Activated T-helper 1 cell treated with anti-CD3 and anti-CD28 coated beads, Interleukin-12 subunit alpha, Interleukin-12 subunit beta, Interleukin-2, Interleukin-4 antibody, amounts not matched to agents 30 ng/mL and 10 ng/mL and 1 ng/mL, durations not matched to agents 14 hours and 24 hours and 36 hours (primary cell): ENCODE measurements at regions of chr12 and their contacts with region 1.

Region 1: DNA sequence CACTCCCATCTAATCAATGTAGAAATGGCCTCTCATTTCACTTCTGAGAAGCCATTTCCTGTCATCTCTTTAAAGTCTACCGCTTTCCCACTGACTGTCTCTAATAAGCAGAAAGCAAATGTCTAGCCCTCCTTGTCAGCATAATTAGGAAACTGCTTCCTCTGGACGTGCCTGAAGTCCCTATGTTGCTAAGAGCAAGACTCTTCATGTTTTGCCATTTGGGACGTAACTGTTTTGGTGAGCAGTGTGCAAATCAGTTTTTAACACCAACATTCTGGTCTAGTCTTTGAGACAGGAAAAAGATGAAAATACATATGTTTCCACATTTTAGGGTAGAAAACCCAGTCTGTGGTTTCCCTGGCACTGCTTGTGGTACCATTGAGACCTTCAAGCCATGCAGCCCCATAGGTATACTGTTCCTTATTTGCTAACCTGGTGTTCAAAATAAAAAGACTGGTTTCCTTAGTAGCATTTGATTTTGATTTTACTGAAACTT is 22.2 kb downstream of the IFNG start:
- DNase-seq: no peak
- H3K4me3 Mint-ChIP-seq: peak overlapping the region; percentile 61
- H3K27ac Mint-ChIP-seq: peak overlapping the region; percentile 91
- H3K4me1 Mint-ChIP-seq: peaks cover 75% of the 10 kb centered on the region
- H3K27me3 Mint-ChIP-seq: no peaks in the 10 kb centered on the region

Region 2: DNA sequence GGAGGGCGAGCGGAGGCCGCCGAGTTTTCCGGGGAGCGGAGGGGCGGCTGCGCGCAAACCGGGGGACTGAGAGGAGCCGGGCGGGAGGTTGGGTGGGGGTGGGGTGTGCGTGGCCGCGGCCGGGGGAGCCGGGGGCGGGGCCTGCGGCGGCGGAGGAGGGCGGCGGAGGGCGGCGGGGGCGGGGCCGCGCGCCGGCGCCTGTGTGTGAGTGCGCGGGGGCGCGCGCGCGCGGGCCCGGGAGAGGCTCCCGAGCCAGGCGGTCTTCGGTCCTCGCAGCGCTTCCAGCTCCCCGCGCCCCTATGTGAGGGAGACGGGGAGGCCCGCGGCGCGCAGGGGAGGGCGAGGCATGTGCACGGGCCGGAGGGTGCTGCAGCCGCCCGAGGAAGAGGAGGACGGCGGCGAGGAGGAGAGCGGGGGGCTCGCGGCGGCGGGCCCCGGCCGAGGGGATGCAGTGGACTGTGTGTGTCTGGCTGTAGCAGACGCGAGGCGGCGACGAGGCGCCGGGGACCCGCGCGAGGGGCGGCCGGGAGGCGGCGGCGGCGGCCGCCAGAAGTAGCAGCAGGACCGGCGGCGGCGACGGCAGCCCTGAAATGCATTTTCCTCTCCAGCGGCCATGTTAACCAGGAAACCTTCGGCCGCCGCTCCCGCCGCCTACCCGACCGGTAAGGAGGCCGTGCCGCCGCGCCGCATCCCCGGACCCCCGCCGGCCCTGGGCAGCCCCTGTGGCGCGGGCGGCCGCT is 488.7 kb before region 1 on chr12 and contains the start of gene DYRK2:
- intact Hi-C with region 1: no loop called
- DNase-seq: peak; percentile 67
- H3K4me3 Mint-ChIP-seq: peak within 1 kb of the TSS; percentile 94
- H3K27ac Mint-ChIP-seq: peak within 1 kb of the TSS; percentile 89
- H3K4me1 Mint-ChIP-seq: peaks cover 42% of the 10 kb centered on the region
- H3K27me3 Mint-ChIP-seq: peaks cover 3% of the 10 kb centered on the region
- total RNA-seq, gene DYRK2: 43.0 and 46.7 TPM in 2 replicates

Region 3: DNA sequence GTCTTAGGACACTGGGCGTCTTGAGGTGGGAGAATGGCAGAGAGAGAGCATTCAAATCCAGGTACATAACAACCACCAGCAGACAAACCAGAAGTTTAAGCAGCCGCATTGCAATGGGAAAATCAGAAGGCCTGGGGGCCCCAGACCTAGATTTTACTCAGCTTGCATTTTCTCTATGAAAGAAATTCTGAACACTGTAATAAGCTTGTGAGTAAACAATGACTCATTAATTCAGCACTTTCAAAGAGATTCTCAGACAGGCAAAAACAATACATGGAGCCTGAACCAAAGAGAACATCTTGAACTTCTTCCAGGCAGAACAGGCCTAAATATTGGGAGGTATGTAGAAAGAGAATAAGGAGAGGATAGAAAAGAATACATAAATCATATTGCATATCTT is 218.0 kb before region 1 on chr12:
- intact Hi-C with region 1: no loop called
- DNase-seq: no peak
- H3K4me3 Mint-ChIP-seq: no peak overlapping the region
- H3K27ac Mint-ChIP-seq: no peak overlapping the region
- H3K4me1 Mint-ChIP-seq: no peaks in the 10 kb centered on the region
- H3K27me3 Mint-ChIP-seq: peaks cover 6% of the 10 kb centered on the region

Region 4: DNA sequence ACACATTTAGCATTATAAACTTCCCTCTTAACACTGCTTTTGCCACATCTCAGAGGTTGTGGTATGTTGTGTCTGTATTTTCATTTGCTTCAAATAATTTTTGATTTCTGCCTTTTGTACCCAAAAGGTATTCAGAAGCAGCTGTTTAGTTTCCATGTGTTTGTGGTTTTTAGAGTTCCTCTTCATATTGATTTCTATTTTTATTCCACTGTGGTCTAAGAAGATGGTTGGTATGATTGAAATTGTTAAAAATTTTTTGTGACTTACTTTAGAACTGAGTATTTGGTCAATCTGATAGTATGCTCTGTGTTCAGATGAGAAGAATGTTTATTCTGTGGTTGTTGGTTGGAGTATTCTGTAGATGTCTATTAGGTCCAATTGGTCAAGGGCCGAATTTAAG is 71.7 kb before region 1 on chr12:
- intact Hi-C with region 1: no loop called
- DNase-seq: no peak
- H3K4me3 Mint-ChIP-seq: no peak overlapping the region
- H3K27ac Mint-ChIP-seq: peak overlapping the region; percentile 36
- H3K4me1 Mint-ChIP-seq: peaks cover 32% of the 10 kb centered on the region
- H3K27me3 Mint-ChIP-seq: no peaks in the 10 kb centered on the region

Region 5: GRCh38 chr12:68106160-68106559 is 31.2 kb before region 1 on chr12:
- intact Hi-C with region 1: loop called (anchors 1 kb)
- DNase-seq: no peak
- H3K4me3 Mint-ChIP-seq: no peak overlapping the region
- H3K27ac Mint-ChIP-seq: no peak overlapping the region
- H3K4me1 Mint-ChIP-seq: peaks cover 16% of the 10 kb centered on the region
- H3K27me3 Mint-ChIP-seq: no peaks in the 10 kb centered on the region

Region 6: DNA sequence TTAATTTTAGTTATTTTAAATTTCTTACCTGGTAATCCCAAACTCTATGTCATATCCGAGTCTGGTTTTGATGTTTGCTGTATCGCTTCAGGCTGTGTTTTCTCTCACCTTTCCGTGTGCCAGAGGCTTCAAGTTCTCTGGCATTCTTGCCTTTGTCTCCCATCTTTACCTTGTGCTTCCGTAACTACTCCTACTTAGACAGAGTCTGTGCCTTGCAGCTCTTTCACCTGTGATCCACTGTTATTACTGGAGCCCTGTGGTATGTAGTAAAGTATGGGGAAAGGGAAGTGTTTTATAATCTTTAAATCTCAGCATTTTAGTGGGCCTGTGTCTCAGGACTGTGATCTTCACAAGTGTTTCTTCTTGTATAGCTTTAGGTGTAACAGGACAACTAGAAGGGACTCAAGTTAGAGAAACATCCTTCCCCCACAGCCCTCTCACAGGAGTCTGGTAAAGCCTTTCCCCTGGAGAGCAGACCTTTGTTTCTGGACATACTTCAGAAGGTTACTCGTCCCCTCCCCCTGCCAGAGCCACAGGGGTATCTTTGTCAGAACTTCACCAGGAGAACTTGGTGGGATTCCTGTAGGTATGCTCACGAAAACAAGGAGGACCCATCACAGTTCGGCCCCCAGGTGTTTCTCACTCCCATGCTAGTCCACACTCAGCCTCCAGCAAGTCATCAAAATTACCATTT is 11.0 kb after region 1 on chr12:
- intact Hi-C with region 1: loop called (anchors 1 kb)
- DNase-seq: no peak
- H3K4me3 Mint-ChIP-seq: no peak overlapping the region
- H3K27ac Mint-ChIP-seq: no peak overlapping the region
- H3K4me1 Mint-ChIP-seq: peaks cover 50% of the 10 kb centered on the region
- H3K27me3 Mint-ChIP-seq: no peaks in the 10 kb centered on the region

Region 7: DNA sequence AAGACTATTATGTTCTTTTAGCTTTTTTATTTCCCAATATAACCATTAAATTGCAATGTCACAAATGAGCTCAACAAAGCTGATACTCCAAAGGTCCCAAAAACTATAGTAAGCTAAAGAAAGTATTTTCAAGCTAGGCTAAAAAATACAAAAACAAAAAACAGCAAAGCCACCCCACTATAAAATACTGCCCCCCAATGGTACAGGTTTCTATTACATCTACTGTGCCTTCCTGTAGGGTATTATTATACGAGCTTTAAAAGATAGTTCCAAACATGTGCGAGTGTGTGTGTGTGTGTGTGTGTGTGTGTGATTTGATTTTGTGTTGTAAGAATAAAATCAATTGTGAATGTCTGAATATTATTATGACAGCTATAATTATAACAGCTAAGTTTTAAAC is 21.0 kb after region 1 on chr12:
- intact Hi-C with region 1: loop called (anchors 1 kb)
- DNase-seq: no peak
- H3K4me3 Mint-ChIP-seq: peak overlapping the region; percentile 91
- H3K27ac Mint-ChIP-seq: peak overlapping the region; percentile 87
- H3K4me1 Mint-ChIP-seq: peaks cover 65% of the 10 kb centered on the region
- H3K27me3 Mint-ChIP-seq: no peaks in the 10 kb centered on the region

Region 8: GRCh38 chr12:68175557-68176061 is 38.2 kb after region 1 on chr12:
- intact Hi-C with region 1: loop called (anchors 1 kb)
- DNase-seq: peak; percentile 81
- H3K4me3 Mint-ChIP-seq: peak overlapping the region; percentile 32
- H3K27ac Mint-ChIP-seq: peak overlapping the region; percentile 85
- H3K4me1 Mint-ChIP-seq: peaks cover 81% of the 10 kb centered on the region
- H3K27me3 Mint-ChIP-seq: no peaks in the 10 kb centered on the region

Region 9: DNA sequence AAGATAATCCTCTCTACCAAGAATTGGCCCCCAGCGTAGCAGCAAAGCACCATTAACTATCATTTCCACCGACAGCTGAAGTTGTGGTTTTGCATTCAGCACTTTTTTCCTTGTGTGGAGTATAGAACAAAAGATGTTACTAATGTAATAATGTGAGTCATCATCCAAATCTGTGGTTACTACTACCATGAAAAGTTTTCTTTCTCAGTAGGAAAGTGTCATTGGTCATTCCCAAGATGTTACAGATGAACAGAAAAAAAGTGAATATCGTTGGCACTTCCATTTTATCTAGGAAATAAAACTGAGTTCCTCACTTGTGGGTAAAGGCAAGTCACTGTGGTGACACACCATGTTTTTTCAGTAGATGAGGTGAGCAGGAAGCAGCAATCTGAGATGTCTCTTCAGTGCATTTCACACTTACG is 52.4 kb after region 1 on chr12:
- intact Hi-C with region 1: loop called (anchors 2 kb)
- DNase-seq: peak; percentile 41
- H3K4me3 Mint-ChIP-seq: peak overlapping the region; percentile 52
- H3K27ac Mint-ChIP-seq: peak overlapping the region; percentile 94
- H3K4me1 Mint-ChIP-seq: peaks cover 75% of the 10 kb centered on the region
- H3K27me3 Mint-ChIP-seq: no peaks in the 10 kb centered on the region

Region 10: DNA sequence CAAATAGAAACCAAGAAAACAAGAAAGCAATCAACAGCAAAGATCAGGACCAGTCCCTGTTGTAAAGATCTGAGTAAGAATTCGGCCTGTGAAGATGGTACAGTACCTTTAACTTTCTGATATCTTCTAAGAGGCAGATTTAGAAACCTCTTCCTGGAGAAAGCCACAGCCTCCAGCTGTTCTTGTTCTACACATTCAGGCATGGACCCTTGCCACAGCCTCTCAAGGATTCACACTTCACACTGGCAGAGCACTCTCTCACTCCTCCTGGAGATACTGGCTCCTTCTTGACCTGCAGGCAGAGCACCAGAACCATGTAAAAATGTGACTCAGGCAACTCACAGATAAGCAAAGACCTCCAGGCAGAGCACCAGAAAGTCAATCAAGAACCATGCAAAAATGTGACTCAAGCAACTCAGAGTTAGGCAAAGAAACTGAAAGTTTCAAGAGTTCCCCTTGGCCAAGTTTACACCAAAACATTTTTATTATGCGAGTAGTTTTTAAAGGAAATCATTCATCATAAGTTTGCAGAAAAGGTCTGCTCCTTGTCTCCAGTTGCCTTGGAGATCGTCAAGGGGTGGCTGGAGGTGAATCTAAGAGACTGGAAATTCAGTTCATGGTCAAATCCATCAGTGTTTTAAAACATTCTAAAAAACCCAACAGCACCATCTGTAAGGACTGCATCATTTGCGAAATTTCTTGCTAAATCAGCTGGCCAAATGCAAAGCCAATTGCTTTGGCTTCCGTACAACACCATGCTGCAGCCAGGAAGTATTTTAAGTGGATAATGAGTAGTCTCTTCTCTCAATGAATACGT is 314.1 kb after region 1 on chr12:
- intact Hi-C with region 1: no loop called
- DNase-seq: peak; percentile 53
- H3K4me3 Mint-ChIP-seq: peak overlapping the region; percentile 73
- H3K27ac Mint-ChIP-seq: peak overlapping the region; percentile 97
- H3K4me1 Mint-ChIP-seq: peaks cover 99% of the 10 kb centered on the region
- H3K27me3 Mint-ChIP-seq: no peaks in the 10 kb centered on the region